ENCODE measurements at regions of chr1 and their contacts with region 1.

Region 1: GRCh38 chr1:43706598-43707495 is 489 bp upstream of the ST3GAL3 start:
- DNase-seq: peak; percentile 91
- ATAC-seq: peak; percentile 96 to 99 (median 99)
- H3K4me3 ChIP-seq: peak overlapping the region; percentile 37 to 96 (median 80)
- H3K27ac ChIP-seq: peak overlapping the region in 8 of 10 donors; percentile 0 to 89 (median 82)
- H3K4me1 ChIP-seq: peaks cover 6 to 40% (median 20%) of the 10 kb centered on the region in 9 donors
- H3K27me3 ChIP-seq: no peaks in the 10 kb centered on the region
- CTCF ChIP-seq: no peak

Region 2: DNA sequence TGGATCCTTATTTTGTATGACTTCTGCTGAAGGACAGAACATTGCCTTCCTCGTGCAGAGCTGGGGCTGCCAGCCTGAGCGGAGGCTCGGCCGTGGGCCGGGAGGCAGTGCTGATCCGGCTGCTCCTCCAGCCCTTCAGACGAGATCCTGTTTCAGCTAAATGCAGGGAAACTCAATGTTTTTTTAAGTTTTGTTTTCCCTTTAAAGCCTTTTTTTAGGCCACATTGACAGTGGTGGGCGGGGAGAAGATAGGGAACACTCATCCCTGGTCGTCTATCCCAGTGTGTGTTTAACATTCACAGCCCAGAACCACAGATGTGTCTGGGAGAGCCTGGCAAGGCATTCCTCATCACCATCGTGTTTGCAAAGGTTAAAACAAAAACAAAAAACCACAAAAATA is 84.4 kb before region 1 on chr1:
- intact Hi-C with region 1: no loop called
- DNase-seq: no peak
- ATAC-seq: no peak
- H3K4me3 ChIP-seq: no peak overlapping the region
- H3K27ac ChIP-seq: no peak overlapping the region
- H3K4me1 ChIP-seq: no peaks in the 10 kb centered on the region
- H3K27me3 ChIP-seq: no peaks in the 10 kb centered on the region
- CTCF ChIP-seq: no peak

Region 3: DNA sequence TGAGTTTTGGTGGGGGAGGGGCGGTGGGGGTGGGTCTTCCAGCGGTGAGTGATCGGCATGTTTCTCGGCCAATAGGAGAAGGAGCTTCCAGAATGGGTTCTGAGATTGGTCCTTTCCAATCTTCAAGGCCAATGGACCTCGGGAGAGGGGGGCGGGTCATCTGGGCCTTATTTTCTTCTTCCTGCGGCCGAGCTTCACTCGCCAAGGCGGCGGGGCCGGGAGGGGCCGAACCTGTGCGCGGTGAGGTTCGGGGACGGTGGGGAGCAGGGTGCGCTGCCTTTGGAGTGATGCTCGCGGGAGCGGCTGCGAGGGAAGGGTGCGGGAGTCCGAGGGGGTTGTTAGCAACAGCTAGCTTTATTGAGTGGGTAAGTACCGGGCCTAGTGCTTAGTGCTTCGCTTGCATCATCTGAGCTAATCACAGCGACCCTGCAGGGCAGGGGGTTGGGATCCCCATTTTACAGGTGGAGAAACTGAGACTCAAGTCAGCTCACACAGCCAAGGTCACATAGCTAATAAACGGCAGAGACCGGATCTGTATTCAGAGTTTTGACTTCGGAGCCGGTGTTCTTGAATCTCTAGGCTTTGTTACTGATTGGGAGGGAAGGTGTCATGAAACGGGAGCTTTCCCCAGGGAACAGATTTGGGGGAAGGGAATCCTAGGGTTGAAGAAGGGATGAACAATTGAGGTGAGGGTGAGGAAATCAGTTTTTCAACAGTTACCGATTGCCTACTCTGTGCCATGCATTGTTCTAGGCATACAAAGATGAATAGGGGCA is 56.3 kb before region 1 on chr1:
- intact Hi-C with region 1: loop called in 3 of 10 experiments (anchors 5 to 10 kb)
- DNase-seq: peak; percentile 88 to 99
- ATAC-seq: peak; percentile 88 to 94 (median 92)
- H3K4me3 ChIP-seq: peak overlapping the region; percentile 46 to 93 (median 78)
- H3K27ac ChIP-seq: peak overlapping the region; percentile 69 to 95 (median 90)
- H3K4me1 ChIP-seq: peaks cover 9 to 40% (median 19%) of the 10 kb centered on the region in 9 donors
- H3K27me3 ChIP-seq: peaks cover 0 to 1% (median 0%) of the 10 kb centered on the region in 7 donors
- CTCF ChIP-seq: no peak

Region 4: GRCh38 chr1:43659212-43660166 is 47.4 kb before region 1 on chr1:
- intact Hi-C with region 1: loop called in 3 of 10 experiments (anchors 5 to 10 kb)
- DNase-seq: no peak
- ATAC-seq: no peak
- H3K4me3 ChIP-seq: no peak overlapping the region
- H3K27ac ChIP-seq: no peak overlapping the region
- H3K4me1 ChIP-seq: no peaks in the 10 kb centered on the region
- H3K27me3 ChIP-seq: no peaks in the 10 kb centered on the region
- CTCF ChIP-seq: no peak

Region 5: GRCh38 chr1:43946236-43947060 is 239.6 kb after region 1 on chr1 and contains the start of gene IPO13:
- intact Hi-C with region 1: loop called in 1 of 10 experiments (anchors 5 kb)
- DNase-seq: peak; percentile 95
- ATAC-seq: peak; percentile 93 to 96 (median 94)
- H3K4me3 ChIP-seq: peak within 1 kb of the TSS; percentile 53 to 94 (median 72)
- H3K27ac ChIP-seq: peak within 1 kb of the TSS; percentile 90 to 100 (median 97)
- H3K4me1 ChIP-seq: peaks cover 16 to 61% (median 44%) of the 10 kb centered on the region in 9 donors
- H3K27me3 ChIP-seq: no peaks in the 10 kb centered on the region
- CTCF ChIP-seq: peak; percentile 36 to 87 (median 75)
- total RNA-seq, gene IPO13: 53.3 to 66.1 (median 56.8) TPM

Measured in heart right ventricle (tissue), 16 donors.